Activated CD8-positive, alpha-beta memory T cell treated with anti-CD3 and anti-CD28 coated beads, Interleukin-2, amount 10 ng/mL, durations not matched to agents 7 days and 5 days (primary cell): ENCODE measurements at regions of chr9 and their contacts with region 1.

Region 1: GRCh38 chr9:129221233-129221632 is 43.2 kb upstream of the IER5L start:
- DNase-seq: peak; percentile 83
- ATAC-seq: peak; percentile 81
- H3K4me3 Mint-ChIP-seq: no peak overlapping the region
- H3K27ac Mint-ChIP-seq: peak overlapping the region; percentile 64
- H3K4me1 Mint-ChIP-seq: peaks cover 44% of the 10 kb centered on the region
- H3K27me3 Mint-ChIP-seq: no peaks in the 10 kb centered on the region

Region 2: GRCh38 chr9:129237195-129237611 is 16.0 kb after region 1 on chr9:
- CTCF ChIA-PET with region 1: interaction called, 13 read pairs
- DNase-seq: peak; percentile 66
- ATAC-seq: peak; percentile 68
- H3K4me3 Mint-ChIP-seq: peak overlapping the region; percentile 57
- H3K27ac Mint-ChIP-seq: peak overlapping the region; percentile 82
- H3K4me1 Mint-ChIP-seq: peaks cover 53% of the 10 kb centered on the region
- H3K27me3 Mint-ChIP-seq: no peaks in the 10 kb centered on the region